ENCODE measurements at regions of chr11 and their contacts with region 1.

Region 1: GRCh38 chr11:47509077-47509536 is 43.8 kb downstream of the CELF1 start:
- DNase-seq: no peak
- H3K4me3 ChIP-seq: no peak overlapping the region
- H3K27ac ChIP-seq: peak overlapping the region; percentile 42 to 57 (median 51)
- H3K4me1 ChIP-seq: peaks cover 61 to 99% (median 91%) of the 10 kb centered on the region in 4 donors
- H3K27me3 ChIP-seq: no peaks in the 10 kb centered on the region
- CTCF ChIP-seq: no peak
- EP300 ChIP-seq: no peak
- POLR2A ChIP-seq: no peak

Region 2: GRCh38 chr11:47443042-47443700 is 65.9 kb before region 1 on chr11:
- intact Hi-C with region 1: no loop called
- DNase-seq: no peak
- H3K4me3 ChIP-seq: no peak overlapping the region
- H3K27ac ChIP-seq: no peak overlapping the region
- H3K4me1 ChIP-seq: peaks cover 0 to under 1% (median under 1%) of the 10 kb centered on the region in 4 donors
- H3K27me3 ChIP-seq: no peaks in the 10 kb centered on the region
- CTCF ChIP-seq: no peak
- EP300 ChIP-seq: no peak
- POLR2A ChIP-seq: no peak

Region 3: DNA sequence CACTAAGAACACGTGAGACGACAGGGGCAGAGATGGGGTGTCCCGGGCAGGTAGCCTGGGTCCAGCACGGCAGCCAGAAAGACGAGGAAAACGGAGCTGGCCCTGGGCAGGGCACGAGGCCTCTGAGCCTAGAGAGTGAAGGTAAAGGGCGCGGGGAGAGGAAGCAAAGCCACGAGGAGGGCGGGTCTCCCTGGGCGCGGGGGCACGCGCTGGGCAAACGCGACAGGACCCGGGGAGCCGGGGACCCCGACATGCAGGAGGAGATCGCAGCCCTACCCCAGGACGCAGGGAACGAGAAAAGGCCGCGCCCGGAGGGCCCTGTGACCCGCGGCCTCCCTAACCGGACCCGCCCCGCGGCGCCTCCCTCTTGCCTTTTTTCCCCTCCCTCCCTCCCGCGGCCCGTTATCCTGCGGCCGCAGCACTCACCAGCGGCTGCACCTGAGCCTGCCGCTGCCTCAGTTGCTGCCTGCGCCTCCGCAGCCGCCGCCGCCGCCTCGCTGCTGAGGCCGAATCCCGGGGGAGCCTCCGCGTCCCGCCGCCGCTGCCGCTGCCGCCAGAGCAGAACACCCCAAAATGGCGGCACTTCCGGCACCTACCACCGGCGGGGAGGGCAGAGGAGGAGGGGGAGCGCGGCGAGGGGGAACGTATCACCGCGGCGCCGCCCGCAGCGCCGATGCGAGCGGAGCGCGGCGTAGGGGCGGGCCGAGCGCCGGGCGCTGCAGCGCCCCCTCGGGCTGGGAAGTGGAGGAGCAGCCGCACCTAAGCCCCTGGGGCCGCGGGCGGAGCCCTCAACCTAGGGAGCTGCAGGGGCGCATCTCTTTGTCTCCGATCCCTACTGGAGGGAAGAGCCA is 43.7 kb after region 1 on chr11 and contains the start of gene CELF1:
- intact Hi-C with region 1: loop called (anchors 5 kb)
- DNase-seq: peak; percentile 98
- H3K4me3 ChIP-seq: peak within 1 kb of the TSS; percentile 64 to 100 (median 94)
- H3K27ac ChIP-seq: peak within 1 kb of the TSS; percentile 79 to 97 (median 94)
- H3K4me1 ChIP-seq: peaks cover 39 to 55% (median 48%) of the 10 kb centered on the region in 4 donors
- H3K27me3 ChIP-seq: no peaks in the 10 kb centered on the region
- CTCF ChIP-seq: peak; percentile 94 to 97 (median 97)
- EP300 ChIP-seq: no peak
- POLR2A ChIP-seq: peak; percentile 69
- total RNA-seq, gene CELF1: 69.6 to 151 (median 99.3) TPM

Measured in esophagus muscularis mucosa (tissue), 4 donors.